Breast epithelium (tissue), 4 donors: ENCODE measurements at regions of chr9 and their contacts with region 1.

Region 1: DNA sequence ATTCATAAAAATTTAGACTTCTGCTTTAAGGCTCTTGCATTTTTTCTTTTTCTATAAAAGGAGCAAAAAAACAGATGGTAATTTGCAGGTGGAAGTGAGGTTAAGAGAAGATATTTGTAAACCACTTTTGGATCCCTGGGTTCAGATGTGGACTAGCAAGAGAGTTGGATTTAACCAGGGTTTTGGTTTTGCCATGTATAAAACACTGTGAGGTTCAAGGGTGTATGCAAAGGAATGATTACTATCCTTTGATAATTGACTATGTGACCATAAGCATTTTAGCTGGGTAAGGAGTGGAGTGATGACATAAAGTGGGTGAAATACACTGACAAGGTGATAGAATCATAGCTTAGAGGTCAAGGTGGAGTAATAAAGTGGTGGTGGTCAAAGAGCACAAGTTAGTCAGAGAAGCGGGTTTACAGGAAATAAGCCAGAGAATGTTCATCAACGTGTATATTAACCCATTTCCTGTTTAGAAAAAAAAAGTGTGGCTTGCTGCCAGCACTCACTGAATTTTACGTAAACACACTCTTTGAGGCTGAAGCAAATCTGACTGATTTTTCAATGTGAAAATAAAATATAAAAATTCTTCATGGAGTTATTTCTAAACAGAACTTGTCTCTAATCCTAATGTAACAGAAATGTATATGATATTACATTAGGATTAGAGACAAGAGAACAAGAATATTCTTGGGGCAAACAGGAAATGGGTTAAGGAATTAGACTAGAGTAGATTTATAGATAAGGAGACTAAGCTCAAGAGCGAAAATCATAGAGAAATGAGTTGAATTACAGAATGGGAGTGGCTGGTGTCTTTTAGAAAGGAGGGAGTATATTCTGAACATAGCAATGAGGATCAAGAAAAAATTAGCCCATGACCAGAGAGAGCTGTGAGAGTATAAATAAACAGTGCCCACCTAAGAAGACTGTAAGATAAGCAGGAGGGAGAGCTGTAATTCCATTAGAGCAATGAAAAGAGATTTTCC is 74.5 kb downstream of the CDKN2A start:
- DNase-seq: no peak
- H3K4me3 ChIP-seq: no peak overlapping the region
- H3K27ac ChIP-seq: no peak overlapping the region
- H3K4me1 ChIP-seq: no peaks in the 10 kb centered on the region
- H3K27me3 ChIP-seq: no peaks in the 10 kb centered on the region
- CTCF ChIP-seq: no peak
- POLR2A ChIP-seq: no peak

Region 2: DNA sequence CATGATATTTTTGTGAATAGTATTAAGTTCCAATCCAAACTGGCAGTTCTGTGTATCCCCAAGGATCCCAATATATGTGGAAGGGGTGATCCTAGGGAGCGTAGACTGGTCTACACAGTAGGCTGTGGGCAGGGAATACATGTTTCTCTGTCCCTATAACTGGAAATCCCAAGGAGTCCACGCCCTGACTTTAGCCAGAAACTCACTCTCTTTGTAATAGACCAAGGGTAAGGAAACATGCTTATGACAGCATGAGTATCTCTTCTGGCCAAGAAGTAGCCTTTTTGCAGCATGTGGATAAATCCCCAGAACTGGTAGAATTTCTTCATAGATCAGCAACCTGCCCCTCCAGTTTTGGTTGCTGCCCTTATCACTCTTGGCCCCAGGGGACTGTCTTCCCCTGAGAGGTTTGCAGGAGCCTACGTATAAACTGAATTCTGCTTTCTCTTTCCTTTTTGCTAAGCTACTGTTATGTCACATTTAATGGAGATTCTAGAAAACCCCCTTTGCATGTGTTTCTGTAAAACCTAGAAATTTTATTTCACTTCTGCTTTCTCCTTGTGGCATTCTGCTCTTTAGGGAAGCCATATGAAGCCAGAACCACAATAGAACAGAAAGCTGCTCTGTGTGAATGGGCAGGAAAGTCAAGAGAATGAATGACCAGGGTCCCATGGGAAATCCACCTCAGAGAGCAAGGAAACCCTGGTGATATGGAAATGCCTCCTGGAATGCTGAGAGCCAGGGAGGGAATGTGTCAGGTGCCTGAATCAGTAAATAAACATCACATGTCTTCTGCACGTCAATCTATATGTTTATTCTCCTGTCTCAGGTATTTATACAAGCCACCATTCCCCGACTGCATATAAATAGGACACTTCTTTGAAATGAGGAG is 538.0 kb before region 1 on chr9:
- intact Hi-C with region 1: loop called (anchors 10 kb)
- DNase-seq: no peak
- H3K4me3 ChIP-seq: no peak overlapping the region
- H3K27ac ChIP-seq: no peak overlapping the region
- H3K4me1 ChIP-seq: no peaks in the 10 kb centered on the region
- H3K27me3 ChIP-seq: peaks cover 0 to 7% of the 10 kb centered on the region in 2 donors
- CTCF ChIP-seq: no peak
- POLR2A ChIP-seq: no peak

Region 3: GRCh38 chr9:22265038-22265437 is 345.4 kb after region 1 on chr9:
- intact Hi-C with region 1: loop called (anchors 10 kb)
- DNase-seq: no peak
- H3K4me3 ChIP-seq: no peak overlapping the region
- H3K27ac ChIP-seq: no peak overlapping the region
- H3K4me1 ChIP-seq: no peaks in the 10 kb centered on the region
- H3K27me3 ChIP-seq: no peaks in the 10 kb centered on the region
- CTCF ChIP-seq: no peak
- POLR2A ChIP-seq: no peak